ENCODE measurements at regions of chr12 and their contacts with region 1.

Region 1: DNA sequence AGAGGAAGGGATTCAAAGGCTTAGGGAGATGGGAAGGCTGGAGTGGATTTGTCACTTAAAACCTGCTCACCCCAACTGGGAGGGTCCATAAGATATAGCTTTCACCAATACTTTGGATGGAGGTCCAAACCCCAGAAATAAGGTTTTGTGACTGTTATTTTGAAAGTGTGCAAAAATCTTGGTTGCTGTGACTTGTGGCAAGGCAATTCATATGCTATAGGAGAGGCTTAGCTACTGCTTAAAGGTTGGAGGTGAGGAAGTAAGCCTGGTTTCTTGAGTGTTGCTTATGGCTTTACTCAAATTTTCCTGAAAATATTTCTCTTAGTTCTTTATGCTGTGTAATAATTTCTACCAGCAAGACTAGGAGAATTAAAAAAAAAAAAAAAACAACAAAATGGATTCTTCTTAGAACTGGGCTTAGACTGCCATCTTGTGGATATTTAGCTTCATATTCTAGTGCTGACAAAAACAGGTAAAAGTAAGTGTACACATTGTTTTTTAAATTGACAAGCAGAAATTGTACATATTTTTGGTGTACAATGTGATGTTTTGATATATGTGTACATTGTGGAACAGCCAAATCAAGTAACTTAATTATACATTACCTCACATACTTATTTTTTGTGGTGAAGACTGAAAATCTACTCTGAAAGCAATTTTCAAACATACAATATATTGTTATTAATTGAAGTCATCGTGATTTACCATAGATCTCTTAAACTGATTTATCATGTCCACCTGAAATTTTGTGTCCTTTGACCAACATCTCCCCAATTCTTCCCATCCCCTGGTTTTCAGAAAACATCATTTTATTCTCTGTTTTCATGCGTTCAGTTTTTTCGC is 23.0 kb downstream of the PDE6H start:
- DNase-seq: no peak
- H3K4me3 Mint-ChIP-seq: no peak overlapping the region
- H3K27ac Mint-ChIP-seq: no peak overlapping the region
- H3K4me1 Mint-ChIP-seq: peaks cover 25% of the 10 kb centered on the region
- H3K27me3 Mint-ChIP-seq: no peaks in the 10 kb centered on the region

Region 2: DNA sequence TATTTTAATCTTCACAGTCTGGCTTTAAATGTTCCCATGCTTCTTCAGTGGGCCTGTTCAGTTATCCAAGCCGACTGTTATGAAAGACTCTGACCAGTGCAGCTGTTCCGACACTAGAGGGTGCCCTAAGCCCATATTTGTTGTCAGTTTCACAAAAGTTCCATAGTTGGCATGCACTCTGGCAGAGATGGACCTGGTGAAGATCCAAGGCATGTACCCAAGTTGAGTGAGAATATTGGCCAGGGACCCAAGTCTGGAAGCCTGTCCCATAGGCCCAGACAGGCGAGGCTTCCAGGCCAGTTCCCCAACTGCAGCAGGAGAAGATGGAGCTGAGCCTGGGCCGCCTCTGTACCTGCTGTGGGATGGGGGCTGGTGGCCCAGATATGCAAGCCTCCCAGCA is 272.0 kb before region 1 on chr12:
- CTCF ChIA-PET with region 1: interaction called, 31 read pairs
- intact Hi-C with region 1: loop called (anchors 1 kb)
- DNase-seq: peak; percentile 74
- H3K4me3 Mint-ChIP-seq: no peak overlapping the region
- H3K27ac Mint-ChIP-seq: no peak overlapping the region
- H3K4me1 Mint-ChIP-seq: no peaks in the 10 kb centered on the region
- H3K27me3 Mint-ChIP-seq: no peaks in the 10 kb centered on the region

Region 3: GRCh38 chr12:14803011-14803829 is 192.6 kb before region 1 on chr12 and contains the starts of genes C12orf60 and WBP11:
- CTCF ChIA-PET with region 1: interaction called, 18 read pairs
- intact Hi-C with region 1: loop called (anchors 1 kb)
- DNase-seq: peak; percentile 94
- H3K4me3 Mint-ChIP-seq: no peak within 1 kb of the TSS
- H3K27ac Mint-ChIP-seq: no peak within 1 kb of the TSS
- H3K4me1 Mint-ChIP-seq: peaks cover 34% of the 10 kb centered on the region
- H3K27me3 Mint-ChIP-seq: no peaks in the 10 kb centered on the region
- total RNA-seq, gene C12orf60: 2.0 to 3.1 TPM
- total RNA-seq, gene WBP11: 105 to 115 TPM

Region 4: GRCh38 chr12:14854586-14855183 is 141.1 kb before region 1 on chr12:
- CTCF ChIA-PET with region 1: interaction called, 13 read pairs
- intact Hi-C with region 1: no loop called
- DNase-seq: no peak
- H3K4me3 Mint-ChIP-seq: no peak overlapping the region
- H3K27ac Mint-ChIP-seq: no peak overlapping the region
- H3K4me1 Mint-ChIP-seq: no peaks in the 10 kb centered on the region
- H3K27me3 Mint-ChIP-seq: no peaks in the 10 kb centered on the region

Region 5: GRCh38 chr12:14960548-14961465 is 35.0 kb before region 1 on chr12:
- CTCF ChIA-PET with region 1: interaction called, 4 read pairs
- intact Hi-C with region 1: loop called (anchors 1 kb)
- DNase-seq: peak; percentile 39
- H3K4me3 Mint-ChIP-seq: peak overlapping the region; percentile 98
- H3K27ac Mint-ChIP-seq: peak overlapping the region; percentile 100
- H3K4me1 Mint-ChIP-seq: peaks cover 43% of the 10 kb centered on the region
- H3K27me3 Mint-ChIP-seq: no peaks in the 10 kb centered on the region

Region 6: GRCh38 chr12:15044471-15044870 is 48.7 kb after region 1 on chr12:
- CTCF ChIA-PET with region 1: no interaction called
- intact Hi-C with region 1: no loop called
- DNase-seq: no peak
- H3K4me3 Mint-ChIP-seq: no peak overlapping the region
- H3K27ac Mint-ChIP-seq: no peak overlapping the region
- H3K4me1 Mint-ChIP-seq: peaks cover 3% of the 10 kb centered on the region
- H3K27me3 Mint-ChIP-seq: no peaks in the 10 kb centered on the region

Region 7: GRCh38 chr12:15522565-15523187 is 526.9 kb after region 1 on chr12:
- CTCF ChIA-PET with region 1: no interaction called
- intact Hi-C with region 1: loop called (anchors 5 kb)
- DNase-seq: no peak
- H3K4me3 Mint-ChIP-seq: no peak overlapping the region
- H3K27ac Mint-ChIP-seq: no peak overlapping the region
- H3K4me1 Mint-ChIP-seq: peaks cover 4% of the 10 kb centered on the region
- H3K27me3 Mint-ChIP-seq: peaks cover 14% of the 10 kb centered on the region

Measured in activated naive CD4-positive, alpha-beta T cell treated with anti-CD3 and anti-CD28 coated beads for 36 hours (primary cell).